ENCODE measurements at regions of chr5 and their contacts with region 1.

Region 1: GRCh38 chr5:140700177-140701144 is at the start of gene ZMAT2:
- DNase-seq: peak; percentile 100
- H3K4me3 Mint-ChIP-seq: peak within 1 kb of the TSS; percentile 87
- H3K27ac Mint-ChIP-seq: peak within 1 kb of the TSS; percentile 98
- H3K4me1 Mint-ChIP-seq: peaks cover 13% of the 10 kb centered on the region
- H3K27me3 Mint-ChIP-seq: no peaks in the 10 kb centered on the region
- CTCF ChIP-seq: no peak
- total RNA-seq, gene ZMAT2: 54.9 and 70.4 TPM in 2 replicates

Region 2: DNA sequence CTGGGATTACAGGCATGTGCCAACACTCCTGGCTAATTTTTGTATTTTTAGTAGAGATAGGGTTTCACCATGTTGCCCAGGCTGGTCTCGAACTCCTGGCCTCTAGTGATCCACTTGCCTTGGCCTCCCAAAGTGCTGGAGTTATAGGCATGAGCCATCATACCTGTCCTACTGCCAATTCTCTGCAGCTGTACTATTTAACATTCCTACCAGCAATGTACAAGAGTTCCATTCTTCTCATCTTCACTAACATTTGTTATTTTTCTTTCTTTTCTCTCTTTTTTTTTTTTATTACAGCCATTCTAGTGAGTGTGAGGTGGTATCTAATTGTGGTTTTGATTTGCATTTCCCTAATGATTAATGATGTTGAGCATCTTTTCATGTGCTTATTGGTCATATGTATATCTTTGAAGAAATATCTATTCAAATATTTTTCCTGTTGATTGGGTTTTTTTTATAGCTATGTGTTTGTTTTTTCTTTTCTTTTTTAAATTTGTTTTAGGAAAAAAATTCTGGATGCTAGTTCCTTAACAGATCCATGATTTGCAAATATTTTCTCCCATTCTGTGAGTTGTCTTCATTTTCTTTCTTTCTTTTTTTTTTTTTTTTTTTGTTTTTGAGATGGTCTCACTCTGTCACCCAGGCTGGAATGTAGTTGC is 281.5 kb before region 1 on chr5:
- CTCF ChIA-PET with region 1: no interaction called
- POLR2A ChIA-PET with region 1: no interaction called
- intact Hi-C with region 1: no loop called
- DNase-seq: no peak
- H3K4me3 Mint-ChIP-seq: no peak overlapping the region
- H3K27ac Mint-ChIP-seq: no peak overlapping the region
- H3K4me1 Mint-ChIP-seq: peaks cover 37% of the 10 kb centered on the region
- H3K27me3 Mint-ChIP-seq: no peaks in the 10 kb centered on the region
- CTCF ChIP-seq: no peak

Region 3: GRCh38 chr5:140710899-140711552 is 10.6 kb after region 1 on chr5:
- CTCF ChIA-PET with region 1: interaction called, 3 read pairs
- POLR2A ChIA-PET with region 1: interaction called, 95 read pairs
- intact Hi-C with region 1: no loop called
- DNase-seq: peak; percentile 99
- H3K4me3 Mint-ChIP-seq: peak overlapping the region; percentile 88
- H3K27ac Mint-ChIP-seq: peak overlapping the region; percentile 94
- H3K4me1 Mint-ChIP-seq: peaks cover 5% of the 10 kb centered on the region
- H3K27me3 Mint-ChIP-seq: no peaks in the 10 kb centered on the region
- CTCF ChIP-seq: no peak

Region 4: DNA sequence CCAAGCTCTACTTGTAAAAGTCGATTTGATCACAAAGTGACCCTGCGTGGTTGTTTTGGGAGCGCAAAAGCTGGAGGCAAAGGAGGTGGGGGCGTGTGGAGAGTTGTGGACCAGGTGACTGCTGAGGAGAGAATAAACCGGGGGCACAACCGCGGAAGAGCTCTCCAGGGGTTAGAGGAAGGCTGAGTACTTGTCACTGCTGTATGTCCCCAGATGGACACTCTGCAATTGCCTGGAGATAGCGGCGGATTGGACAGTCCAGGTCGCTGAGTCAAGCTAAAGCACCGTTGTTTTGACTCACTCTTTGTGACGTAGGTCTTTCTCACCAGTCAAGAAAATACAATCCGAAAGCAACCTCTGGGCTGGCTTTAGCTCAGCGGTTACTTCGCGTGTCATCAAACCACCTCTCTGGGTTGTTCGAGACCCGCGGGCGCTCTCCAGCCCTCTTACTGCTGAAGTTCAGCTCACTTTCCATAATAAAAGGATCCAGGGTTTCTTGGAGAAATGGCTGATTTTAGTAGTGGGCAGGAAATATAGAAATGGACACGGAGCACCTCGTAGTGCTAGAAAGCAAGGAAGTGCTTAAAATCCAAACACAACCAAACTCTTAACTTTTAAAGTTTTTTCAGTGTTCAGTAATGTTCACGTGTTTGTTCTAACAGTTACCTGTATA is 25.5 kb after region 1 on chr5:
- CTCF ChIA-PET with region 1: interaction called, 4 read pairs
- POLR2A ChIA-PET with region 1: interaction called, 48 read pairs
- intact Hi-C with region 1: no loop called
- DNase-seq: peak; percentile 99
- H3K4me3 Mint-ChIP-seq: peak overlapping the region; percentile 72
- H3K27ac Mint-ChIP-seq: peak overlapping the region; percentile 42
- H3K4me1 Mint-ChIP-seq: peaks cover 6% of the 10 kb centered on the region
- H3K27me3 Mint-ChIP-seq: no peaks in the 10 kb centered on the region
- CTCF ChIP-seq: no peak

Region 5: DNA sequence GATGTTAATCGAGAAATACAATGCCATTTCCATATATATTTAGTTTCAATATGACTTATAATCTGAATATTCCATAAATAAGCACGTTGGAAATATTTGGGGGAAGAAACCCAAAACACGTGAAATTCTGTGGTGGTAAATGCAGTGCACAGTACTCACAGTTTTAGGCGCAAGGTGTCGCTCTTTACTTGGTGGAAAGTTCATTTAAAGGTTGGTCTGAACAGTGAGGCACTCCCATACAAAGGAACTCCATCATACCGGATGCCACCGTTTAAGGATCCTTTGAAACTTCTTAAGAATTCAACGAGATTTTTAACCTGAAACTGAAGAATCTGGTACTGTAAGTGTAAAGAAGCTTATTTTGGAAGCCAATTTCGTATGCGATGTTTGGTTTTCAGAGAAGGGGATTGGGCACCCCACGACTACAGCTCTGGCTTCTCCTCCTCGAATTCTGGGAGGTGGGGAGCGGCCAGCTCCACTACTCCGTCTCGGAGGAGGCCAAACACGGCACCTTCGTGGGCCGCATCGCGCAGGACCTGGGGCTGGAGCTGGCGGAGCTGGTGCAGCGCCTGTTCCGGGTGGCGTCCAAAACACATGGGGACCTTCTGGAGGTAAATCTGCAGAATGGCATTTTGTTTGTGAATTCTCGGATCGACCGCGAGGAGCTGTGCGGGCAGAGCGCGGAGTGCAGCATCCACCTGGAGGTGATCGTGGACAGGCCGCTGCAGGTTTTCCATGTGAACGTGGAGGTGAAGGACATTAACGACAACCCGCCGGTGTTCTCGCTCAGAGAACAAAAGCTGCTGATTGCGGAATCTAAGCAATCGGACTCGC is 168.5 kb after region 1 on chr5 and contains the start of gene PCDHA11:
- CTCF ChIA-PET with region 1: no interaction called
- POLR2A ChIA-PET with region 1: no interaction called
- intact Hi-C with region 1: no loop called
- DNase-seq: peak; percentile 14
- H3K4me3 Mint-ChIP-seq: no peak within 1 kb of the TSS
- H3K27ac Mint-ChIP-seq: no peak within 1 kb of the TSS
- H3K4me1 Mint-ChIP-seq: peaks cover 4% of the 10 kb centered on the region
- H3K27me3 Mint-ChIP-seq: no peaks in the 10 kb centered on the region
- CTCF ChIP-seq: peak; percentile 47
- total RNA-seq, gene PCDHA11: 0.27 and 0.49 TPM in 2 replicates

Region 6: GRCh38 chr5:141094481-141095262 is 394.2 kb after region 1 on chr5 and contains the start of gene PCDHB2:
- CTCF ChIA-PET with region 1: no interaction called
- POLR2A ChIA-PET with region 1: no interaction called
- intact Hi-C with region 1: no loop called
- DNase-seq: peak; percentile 70
- H3K4me3 Mint-ChIP-seq: peak within 1 kb of the TSS; percentile 74
- H3K27ac Mint-ChIP-seq: peak within 1 kb of the TSS; percentile 89
- H3K4me1 Mint-ChIP-seq: no peaks in the 10 kb centered on the region
- H3K27me3 Mint-ChIP-seq: no peaks in the 10 kb centered on the region
- CTCF ChIP-seq: peak; percentile 58
- total RNA-seq, gene PCDHB2: 2.4 and 2.6 TPM in 2 replicates